Left cardiac atrium (tissue), 4 donors: ENCODE measurements at regions of chr12 and their contacts with region 1.

Region 1: GRCh38 chr12:50314629-50315312 is 31.5 kb upstream of the LIMA1 start:
- DNase-seq: no peak
- ATAC-seq: no peak

Region 2: DNA sequence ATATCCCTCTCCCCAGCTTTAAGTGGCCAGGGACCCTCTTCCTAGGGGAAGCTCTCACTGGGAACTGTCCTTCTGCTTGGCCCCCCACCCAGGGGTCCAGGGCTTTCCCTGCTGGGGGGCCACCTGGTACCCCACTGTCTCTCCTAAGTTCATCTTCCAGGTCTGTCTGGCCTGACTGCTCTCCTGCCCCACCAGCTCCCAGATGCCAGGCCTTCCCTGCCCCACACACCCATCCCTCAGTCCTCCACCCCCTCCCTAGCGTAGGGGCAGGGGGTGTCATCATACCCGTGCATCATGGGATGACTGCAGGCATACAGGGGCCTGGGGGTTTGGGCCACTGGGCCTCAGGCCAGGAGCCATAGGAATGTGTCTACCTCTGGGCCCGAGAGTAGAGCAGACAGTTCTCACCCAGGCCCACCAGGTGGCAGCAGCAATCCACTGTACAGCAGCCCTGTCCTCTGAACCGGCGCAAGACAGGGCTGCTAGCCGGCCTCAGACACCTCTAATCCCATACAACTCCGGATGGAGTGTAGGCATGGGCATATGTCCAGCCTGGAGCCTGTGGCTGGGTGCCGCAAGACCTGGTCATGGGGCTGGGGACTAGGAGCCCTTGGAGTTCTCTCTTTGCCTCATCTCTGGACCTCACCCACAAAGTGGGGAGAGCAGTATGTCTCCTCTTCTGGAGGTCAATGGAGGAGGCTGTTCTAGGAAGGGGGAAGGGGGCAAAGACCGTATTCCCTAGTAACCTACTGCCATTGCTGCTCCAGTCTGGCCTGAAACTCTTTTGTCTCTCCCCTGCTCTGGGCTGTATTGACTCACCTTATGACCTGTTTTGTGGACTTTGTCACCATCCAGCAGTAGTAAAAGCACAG is 239.6 kb before region 1 on chr12:
- intact Hi-C with region 1: loop called in 1 of 2 experiments (anchors 10 kb)
- DNase-seq: peak; percentile 86
- ATAC-seq: peak; percentile 89 to 90

Region 3: GRCh38 chr12:50187084-50187900 is 127.5 kb before region 1 on chr12:
- intact Hi-C with region 1: loop called (anchors 10 kb)
- DNase-seq: no peak
- ATAC-seq: peak; percentile 51 to 59

Region 4: DNA sequence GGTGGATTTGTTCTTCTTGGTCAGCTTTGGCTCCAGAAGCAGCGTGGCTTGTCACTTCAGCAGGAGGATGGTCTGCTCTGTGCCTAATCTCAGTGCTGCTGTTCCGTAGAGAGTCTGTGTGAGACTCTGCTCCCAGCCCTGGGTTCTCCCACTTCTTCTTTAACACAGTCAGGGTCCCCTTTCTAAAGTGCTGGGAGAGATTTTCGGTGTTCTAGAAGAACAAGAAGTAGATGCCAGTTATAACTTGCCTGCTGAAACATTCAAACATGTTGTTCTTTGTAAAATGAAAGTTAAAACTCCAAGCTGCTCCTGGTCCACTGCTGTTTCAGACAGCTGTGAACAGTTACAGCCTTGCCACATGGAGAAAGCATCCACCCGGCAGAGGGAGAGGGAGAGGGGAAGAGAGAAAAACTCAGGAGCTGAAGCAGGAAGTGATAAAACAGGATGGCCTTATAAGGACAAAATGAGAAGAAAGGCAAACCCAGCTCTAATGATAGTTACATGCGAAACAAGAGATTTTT is 92.4 kb before region 1 on chr12:
- intact Hi-C with region 1: loop called in 1 of 2 experiments (anchors 10 kb)
- DNase-seq: peak; percentile 49
- ATAC-seq: peak; percentile 90 to 93